ENCODE measurements at regions of chr1 and their contacts with region 1.

Region 1: DNA sequence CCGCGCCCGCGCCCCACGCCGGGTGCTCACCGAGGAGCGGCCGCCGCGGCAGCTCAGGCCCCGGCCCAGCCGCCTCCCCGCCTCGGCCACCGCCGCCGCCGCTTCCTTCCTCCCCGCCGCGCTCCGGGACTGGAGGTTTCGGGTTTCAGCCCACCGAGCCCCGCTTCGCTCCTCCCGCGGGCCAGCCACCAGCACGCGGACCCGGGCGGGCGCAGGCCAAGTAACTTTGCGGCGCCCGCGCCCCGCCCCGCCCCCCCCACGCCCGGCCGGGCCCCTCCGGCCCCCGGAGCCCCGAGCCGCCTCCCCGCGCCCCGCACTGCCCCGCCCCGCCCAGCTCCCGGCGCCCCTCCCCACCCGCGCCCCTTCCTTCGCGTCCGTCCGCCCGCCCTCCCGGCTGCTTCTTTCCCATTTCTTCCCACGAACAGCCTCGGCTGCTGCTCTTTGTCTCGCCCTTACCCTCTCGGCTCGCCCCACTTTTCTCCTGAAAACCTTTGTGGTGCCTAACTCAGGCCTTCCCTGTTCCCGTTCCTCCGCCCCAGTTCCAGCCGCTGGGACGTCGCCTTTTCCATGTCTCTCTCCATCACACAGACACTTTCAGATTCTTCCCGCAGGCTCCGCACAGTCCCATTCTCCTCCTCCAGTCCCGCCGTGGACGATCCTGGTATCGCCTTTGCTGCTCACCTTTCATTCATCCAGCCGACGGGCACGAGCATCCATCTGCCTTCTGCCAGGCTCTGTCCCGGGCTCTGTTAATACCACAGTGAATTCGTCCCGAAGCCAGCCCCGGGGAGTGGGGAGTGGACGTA is at the start of gene GPR161:
- DNase-seq: peak in 7 of 9 donors; percentile 4 to 48 (median 20)
- ATAC-seq: peak; percentile 56
- H3K4me3 ChIP-seq: peak within 1 kb of the TSS; percentile 63
- H3K4me3 Mint-ChIP-seq: peak within 1 kb of the TSS; percentile 86 to 98 (median 91)
- H3K27ac ChIP-seq: no peak within 1 kb of the TSS
- H3K27ac Mint-ChIP-seq: peak within 1 kb of the TSS in 8 of 9 donors; percentile 38 to 79 (median 71)
- H3K4me1 ChIP-seq: peaks cover 4 to 8% of the 10 kb centered on the region in 2 donors
- H3K4me1 Mint-ChIP-seq: peaks cover 12 to 23% (median 18%) of the 10 kb centered on the region in 7 donors
- H3K27me3 ChIP-seq: peaks cover 0 to 4% of the 10 kb centered on the region in 2 donors
- H3K27me3 Mint-ChIP-seq: peaks cover 37 to 70% (median 40%) of the 10 kb centered on the region in 5 donors
- total RNA-seq, gene GPR161: 0.05 to 0.60 (median 0.17) TPM in 4 of 5 experiments, not detected in the other

Region 2: GRCh38 chr1:167297222-167298214 is 839.4 kb before region 1 on chr1:
- CTCF ChIA-PET with region 1: no interaction called
- POLR2A ChIA-PET with region 1: no interaction called
- intact Hi-C with region 1: no loop called
- DNase-seq: no peak
- ATAC-seq: peak; percentile 64
- H3K4me3 ChIP-seq: no peak overlapping the region
- H3K4me3 Mint-ChIP-seq: no peak overlapping the region
- H3K27ac ChIP-seq: no peak overlapping the region
- H3K27ac Mint-ChIP-seq: peak overlapping the region in 2 of 9 donors; percentile 8 to 16
- H3K4me1 ChIP-seq: no peaks in the 10 kb centered on the region
- H3K4me1 Mint-ChIP-seq: peaks cover 2 to 48% (median 23%) of the 10 kb centered on the region in 7 donors
- H3K27me3 ChIP-seq: no peaks in the 10 kb centered on the region
- H3K27me3 Mint-ChIP-seq: no peaks in the 10 kb centered on the region

Region 3: GRCh38 chr1:168097921-168098528 is 38.9 kb before region 1 on chr1:
- CTCF ChIA-PET with region 1: no interaction called
- POLR2A ChIA-PET with region 1: no interaction called
- intact Hi-C with region 1: loop called in 1 of 2 experiments (anchors 1 kb)
- DNase-seq: no peak
- ATAC-seq: peak; percentile 22
- H3K4me3 ChIP-seq: no peak overlapping the region
- H3K4me3 Mint-ChIP-seq: no peak overlapping the region
- H3K27ac ChIP-seq: no peak overlapping the region
- H3K27ac Mint-ChIP-seq: no peak overlapping the region
- H3K4me1 ChIP-seq: no peaks in the 10 kb centered on the region
- H3K4me1 Mint-ChIP-seq: peaks cover 0 to 3% (median 0%) of the 10 kb centered on the region in 7 donors
- H3K27me3 ChIP-seq: no peaks in the 10 kb centered on the region
- H3K27me3 Mint-ChIP-seq: peaks cover 0 to 11% (median 0%) of the 10 kb centered on the region in 5 donors

Region 4: GRCh38 chr1:168301664-168302334 is 164.9 kb after region 1 on chr1:
- CTCF ChIA-PET with region 1: no interaction called
- POLR2A ChIA-PET with region 1: no interaction called
- intact Hi-C with region 1: no loop called
- DNase-seq: no peak
- ATAC-seq: no peak
- H3K4me3 ChIP-seq: no peak overlapping the region
- H3K4me3 Mint-ChIP-seq: no peak overlapping the region
- H3K27ac ChIP-seq: no peak overlapping the region
- H3K27ac Mint-ChIP-seq: no peak overlapping the region
- H3K4me1 ChIP-seq: no peaks in the 10 kb centered on the region
- H3K4me1 Mint-ChIP-seq: peaks cover 0 to 2% (median 0%) of the 10 kb centered on the region in 7 donors
- H3K27me3 ChIP-seq: no peaks in the 10 kb centered on the region
- H3K27me3 Mint-ChIP-seq: no peaks in the 10 kb centered on the region

Region 5: DNA sequence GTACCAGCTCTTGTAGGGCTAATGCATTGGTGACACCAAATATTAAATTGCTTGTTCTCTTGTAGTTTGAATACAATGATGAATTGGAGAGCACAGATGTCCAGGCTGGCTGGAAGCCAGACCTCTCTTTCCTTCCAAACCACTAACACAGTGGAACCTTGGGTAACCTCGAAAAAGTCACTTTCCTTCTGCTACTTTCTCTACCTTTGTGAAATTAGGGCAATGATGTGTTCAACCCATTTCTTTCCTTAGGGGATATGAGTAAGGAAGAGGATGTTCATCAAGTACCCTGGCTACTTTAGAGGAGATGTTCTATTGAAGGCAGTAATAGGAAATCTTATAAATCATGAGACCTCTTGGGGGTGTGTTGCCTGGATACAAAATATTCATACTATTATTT is 351.2 kb after region 1 on chr1:
- CTCF ChIA-PET with region 1: no interaction called
- POLR2A ChIA-PET with region 1: no interaction called
- intact Hi-C with region 1: no loop called
- DNase-seq: no peak
- ATAC-seq: no peak
- H3K4me3 ChIP-seq: no peak overlapping the region
- H3K4me3 Mint-ChIP-seq: no peak overlapping the region
- H3K27ac ChIP-seq: no peak overlapping the region
- H3K27ac Mint-ChIP-seq: peak overlapping the region in 1 of 9 donors; percentile 23
- H3K4me1 ChIP-seq: peaks cover 15 to 20% of the 10 kb centered on the region in 2 donors
- H3K4me1 Mint-ChIP-seq: peaks cover 25 to 54% (median 42%) of the 10 kb centered on the region in 7 donors
- H3K27me3 ChIP-seq: no peaks in the 10 kb centered on the region
- H3K27me3 Mint-ChIP-seq: peaks cover 0 to 7% (median 0%) of the 10 kb centered on the region in 5 donors